IMR-90 (cell line): ENCODE measurements at regions of chr6 and their contacts with region 1.

Region 1: GRCh38 chr6:26196846-26197648 is 109.8 kb downstream of the HFE start:
- DNase-seq: peak; percentile 95
- ATAC-seq: peak; percentile 68
- H3K4me3 ChIP-seq: peak overlapping the region; percentile 55
- H3K27ac ChIP-seq: peak overlapping the region; percentile 86
- H3K4me1 ChIP-seq: no peaks in the 10 kb centered on the region; the same call in 1 of the 2 replicates
- H3K27me3 ChIP-seq: no peaks in the 10 kb centered on the region
- CTCF ChIP-seq: no peak; the same call in 1 of the 2 replicates
- POLR2A ChIP-seq: peak; percentile 97
- RAD21 ChIP-seq: no peak

Region 2: GRCh38 chr6:25913741-25914140 is 283.3 kb before region 1 on chr6:
- CTCF ChIA-PET with region 1: no interaction called
- POLR2A ChIA-PET with region 1: no interaction called
- dilution Hi-C with region 1: no loop called
- in situ Hi-C with region 1: no loop called
- intact Hi-C with region 1: no loop called
- DNase-seq: no peak
- ATAC-seq: no peak
- H3K4me3 ChIP-seq: no peak overlapping the region
- H3K27ac ChIP-seq: no peak overlapping the region
- H3K4me1 ChIP-seq: no peaks in the 10 kb centered on the region
- H3K27me3 ChIP-seq: no peaks in the 10 kb centered on the region
- CTCF ChIP-seq: no peak
- POLR2A ChIP-seq: no peak
- RAD21 ChIP-seq: no peak

Region 3: DNA sequence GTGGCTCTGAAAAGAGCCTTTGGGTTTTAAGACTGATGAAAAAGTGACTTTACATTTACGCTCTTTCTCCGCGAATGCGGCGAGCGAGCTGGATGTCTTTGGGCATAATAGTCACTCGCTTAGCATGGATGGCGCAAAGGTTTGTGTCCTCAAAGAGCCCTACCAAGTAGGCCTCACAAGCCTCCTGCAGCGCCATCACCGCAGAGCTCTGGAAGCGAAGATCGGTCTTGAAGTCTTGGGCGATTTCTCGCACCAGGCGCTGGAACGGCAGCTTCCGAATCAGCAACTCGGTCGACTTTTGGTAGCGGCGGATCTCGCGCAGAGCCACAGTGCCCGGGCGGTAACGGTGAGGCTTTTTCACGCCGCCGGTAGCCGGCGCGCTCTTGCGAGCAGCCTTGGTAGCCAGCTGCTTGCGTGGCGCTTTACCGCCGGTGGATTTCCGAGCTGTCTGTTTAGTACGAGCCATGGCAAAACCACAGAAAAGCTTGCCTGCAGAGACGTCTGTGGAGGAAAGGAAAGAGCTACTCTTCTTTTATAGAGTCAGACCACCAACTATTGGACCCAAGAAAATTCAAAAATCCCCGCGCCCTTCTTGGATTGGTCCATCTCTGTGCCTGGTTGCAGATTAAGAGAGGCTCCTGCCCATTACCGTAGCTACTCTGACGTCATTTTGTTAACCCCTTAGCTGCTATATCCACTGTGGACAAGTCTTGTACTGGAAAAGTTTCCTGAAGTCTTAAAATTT is 165.3 kb before region 1 on chr6:
- CTCF ChIA-PET with region 1: no interaction called
- POLR2A ChIA-PET with region 1: interaction called, 3 read pairs
- dilution Hi-C with region 1: no loop called
- in situ Hi-C with region 1: no loop called
- intact Hi-C with region 1: loop called (anchors 5 kb)
- DNase-seq: peak; percentile 97
- ATAC-seq: peak; percentile 72
- H3K4me3 ChIP-seq: peak overlapping the region; percentile 73
- H3K27ac ChIP-seq: peak overlapping the region; percentile 27
- H3K4me1 ChIP-seq: no peaks in the 10 kb centered on the region
- H3K27me3 ChIP-seq: no peaks in the 10 kb centered on the region
- CTCF ChIP-seq: peak; percentile 15; the same call in 1 of the 2 replicates
- POLR2A ChIP-seq: peak; percentile 98
- RAD21 ChIP-seq: no peak

Region 4: DNA sequence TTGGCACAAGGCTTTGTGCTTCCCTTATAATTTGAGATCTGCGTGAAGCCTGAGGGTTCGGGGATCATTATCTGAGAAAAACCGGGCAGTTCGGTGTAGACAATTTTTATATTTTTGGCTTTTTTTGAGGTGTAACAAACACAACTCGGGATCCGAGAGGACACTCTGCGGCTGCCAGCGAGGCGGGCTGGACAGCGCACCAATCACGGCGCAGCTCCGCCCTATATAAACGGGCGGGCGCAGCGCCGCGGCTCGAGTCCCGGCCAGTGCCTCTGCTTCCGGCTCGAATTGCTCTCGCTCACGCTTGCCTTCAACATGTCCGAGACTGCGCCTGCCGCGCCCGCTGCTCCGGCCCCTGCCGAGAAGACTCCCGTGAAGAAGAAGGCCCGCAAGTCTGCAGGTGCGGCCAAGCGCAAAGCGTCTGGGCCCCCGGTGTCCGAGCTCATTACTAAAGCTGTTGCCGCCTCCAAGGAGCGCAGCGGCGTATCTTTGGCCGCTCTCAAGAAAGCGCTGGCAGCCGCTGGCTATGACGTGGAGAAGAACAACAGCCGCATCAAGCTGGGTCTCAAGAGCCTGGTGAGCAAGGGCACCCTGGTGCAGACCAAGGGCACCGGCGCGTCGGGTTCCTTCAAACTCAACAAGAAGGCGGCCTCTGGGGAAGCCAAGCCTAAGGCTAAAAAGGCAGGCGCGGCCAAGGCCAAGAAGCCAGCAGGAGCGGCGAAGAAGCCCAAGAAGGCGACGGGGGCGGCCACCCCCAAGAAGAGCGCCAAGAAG is 40.8 kb before region 1 on chr6:
- CTCF ChIA-PET with region 1: no interaction called
- POLR2A ChIA-PET with region 1: interaction called, 7 read pairs
- dilution Hi-C with region 1: no loop called
- in situ Hi-C with region 1: no loop called
- intact Hi-C with region 1: loop called (anchors 2 kb)
- DNase-seq: peak; percentile 87
- ATAC-seq: peak; percentile 80
- H3K4me3 ChIP-seq: peak overlapping the region; percentile 82
- H3K27ac ChIP-seq: peak overlapping the region; percentile 81
- H3K4me1 ChIP-seq: 0 out of 2 replicates have a peak, but pooled peaks cover 1% of the 10 kb centered on the region
- H3K27me3 ChIP-seq: no peaks in the 10 kb centered on the region
- CTCF ChIP-seq: no peak
- POLR2A ChIP-seq: peak; percentile 99
- RAD21 ChIP-seq: no peak

Region 5: DNA sequence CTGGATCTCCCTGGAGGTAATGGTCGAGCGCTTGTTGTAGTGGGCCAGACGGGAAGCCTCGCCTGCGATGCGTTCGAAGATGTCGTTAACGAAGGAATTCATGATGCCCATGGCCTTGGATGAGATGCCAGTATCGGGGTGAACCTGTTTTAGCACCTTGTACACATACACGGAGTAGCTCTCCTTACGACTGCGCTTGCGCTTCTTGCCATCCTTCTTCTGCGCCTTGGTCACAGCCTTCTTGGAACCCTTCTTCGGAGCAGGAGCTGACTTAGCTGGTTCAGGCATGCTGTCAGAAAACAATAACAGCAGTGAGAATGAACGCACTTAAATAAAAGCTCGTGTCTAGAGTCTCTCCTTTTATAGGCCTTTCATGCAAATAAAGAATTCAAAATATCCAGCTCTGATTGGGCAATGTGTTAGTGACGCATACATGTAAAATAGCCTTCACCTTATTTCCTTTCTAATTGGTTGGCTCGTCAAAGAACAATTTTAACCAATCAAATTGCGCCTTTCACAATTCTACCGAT is 19.4 kb after region 1 on chr6:
- CTCF ChIA-PET with region 1: interaction called, 4 read pairs
- POLR2A ChIA-PET with region 1: interaction called, 50 read pairs
- dilution Hi-C with region 1: no loop called
- in situ Hi-C with region 1: no loop called
- intact Hi-C with region 1: no loop called
- DNase-seq: peak; percentile 99
- ATAC-seq: peak; percentile 81
- H3K4me3 ChIP-seq: peak overlapping the region; percentile 47
- H3K27ac ChIP-seq: peak overlapping the region; percentile 22
- H3K4me1 ChIP-seq: no peaks in the 10 kb centered on the region
- H3K27me3 ChIP-seq: no peaks in the 10 kb centered on the region
- CTCF ChIP-seq: no peak
- POLR2A ChIP-seq: peak; percentile 99
- RAD21 ChIP-seq: no peak

Region 6: DNA sequence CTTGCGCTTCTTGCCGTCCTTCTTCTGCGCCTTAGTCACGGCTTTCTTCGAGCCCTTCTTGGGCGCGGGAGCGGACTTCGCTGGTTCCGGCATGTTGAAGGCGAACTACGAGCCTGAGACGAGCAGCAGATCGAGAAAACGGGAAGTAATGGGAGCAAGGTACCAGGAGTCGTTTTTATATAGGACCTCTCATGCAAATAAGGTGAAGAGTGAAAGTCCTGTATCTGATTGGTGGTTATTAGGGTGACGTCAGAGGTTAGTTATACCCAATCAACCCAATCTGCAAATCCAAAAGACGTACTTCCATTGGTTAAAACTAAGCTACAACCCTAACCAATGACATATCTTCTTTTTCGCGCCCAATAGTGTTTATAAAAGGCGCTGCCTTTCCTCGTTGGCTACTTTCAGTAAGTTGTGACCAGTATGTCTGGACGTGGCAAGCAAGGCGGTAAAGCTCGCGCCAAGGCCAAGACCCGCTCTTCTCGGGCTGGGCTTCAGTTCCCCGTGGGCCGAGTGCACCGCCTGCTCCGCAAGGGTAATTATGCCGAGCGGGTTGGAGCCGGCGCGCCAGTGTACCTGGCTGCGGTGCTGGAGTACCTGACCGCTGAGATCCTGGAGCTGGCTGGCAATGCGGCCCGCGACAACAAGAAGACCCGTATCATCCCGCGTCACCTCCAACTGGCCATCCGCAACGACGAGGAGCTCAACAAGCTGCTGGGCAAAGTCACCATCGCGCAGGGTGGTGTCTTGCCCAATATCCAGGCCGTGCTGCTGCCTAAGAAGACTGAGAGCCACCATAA is 949.9 kb after region 1 on chr6:
- CTCF ChIA-PET with region 1: no interaction called
- POLR2A ChIA-PET with region 1: interaction called, 3 read pairs
- dilution Hi-C with region 1: no loop called
- in situ Hi-C with region 1: loop called (anchors 25 kb)
- intact Hi-C with region 1: no loop called
- DNase-seq: peak; percentile 100
- ATAC-seq: peak; percentile 90
- H3K4me3 ChIP-seq: peak overlapping the region; percentile 85
- H3K27ac ChIP-seq: peak overlapping the region; percentile 96
- H3K4me1 ChIP-seq: peaks cover 2% of the 10 kb centered on the region; the same call in 1 of the 2 replicates
- H3K27me3 ChIP-seq: no peaks in the 10 kb centered on the region
- CTCF ChIP-seq: no peak
- POLR2A ChIP-seq: peak; percentile 95
- RAD21 ChIP-seq: no peak